ENCODE measurements at regions of chr4 and their contacts with region 1.

Region 1: GRCh38 chr4:21753084-21753760 is 195.3 kb downstream of the KCNIP4 start:
- DNase-seq: no peak
- H3K4me3 ChIP-seq: no peak overlapping the region
- H3K27ac ChIP-seq: no peak overlapping the region
- H3K27me3 ChIP-seq: no peaks in the 10 kb centered on the region
- CTCF ChIP-seq: no peak

Region 2: DNA sequence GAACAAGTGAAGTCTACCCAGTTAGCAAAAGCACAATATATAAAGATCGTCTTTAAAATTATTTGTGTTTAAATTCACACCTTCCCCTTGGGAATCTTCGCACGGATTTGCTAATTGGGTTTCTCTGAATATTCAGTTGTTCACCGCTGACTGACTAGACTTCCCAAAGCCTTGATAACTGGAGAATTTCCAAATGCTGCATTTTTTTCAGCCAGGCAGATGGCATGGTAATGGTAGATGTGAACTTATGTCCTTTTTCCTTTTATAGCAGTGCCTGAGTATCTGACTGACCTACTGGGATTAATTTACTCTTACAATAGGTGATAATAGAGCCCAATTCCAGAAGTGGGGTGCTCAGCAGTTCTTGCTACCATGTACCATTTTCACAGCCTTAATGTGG is 504.9 kb before region 1 on chr4:
- intact Hi-C with region 1: no loop called
- DNase-seq: peak in 1 of 10 donors; percentile 38
- H3K4me3 ChIP-seq: no peak overlapping the region
- H3K27ac ChIP-seq: no peak overlapping the region
- H3K27me3 ChIP-seq: no peaks in the 10 kb centered on the region
- CTCF ChIP-seq: no peak

Region 3: GRCh38 chr4:21592970-21593670 is 160.1 kb before region 1 on chr4:
- intact Hi-C with region 1: loop called in 1 of 2 experiments (anchors 10 kb)
- DNase-seq: peak in 1 of 10 donors; percentile 66
- H3K4me3 ChIP-seq: no peak overlapping the region
- H3K27ac ChIP-seq: no peak overlapping the region
- H3K27me3 ChIP-seq: no peaks in the 10 kb centered on the region
- CTCF ChIP-seq: no peak

Region 4: DNA sequence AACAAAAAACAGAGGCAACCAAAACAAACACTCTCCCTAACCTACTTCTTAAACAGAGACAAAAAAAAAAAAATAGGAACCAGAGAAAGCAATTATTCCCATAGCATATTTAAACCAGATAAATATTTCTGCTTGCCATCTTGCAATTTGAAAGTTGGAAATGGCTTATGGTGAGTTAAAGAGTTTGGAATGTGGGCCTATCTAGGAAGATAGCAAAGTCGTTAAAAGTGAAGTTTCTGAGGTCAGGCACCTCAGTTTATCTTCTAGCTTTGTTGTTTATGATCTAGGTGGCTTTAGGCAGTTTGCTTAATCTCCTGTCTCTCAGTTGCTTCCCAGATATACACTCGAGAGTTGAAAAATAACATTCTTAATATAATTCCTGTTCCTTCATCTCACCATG is 88.9 kb before region 1 on chr4:
- intact Hi-C with region 1: no loop called
- DNase-seq: no peak
- H3K4me3 ChIP-seq: no peak overlapping the region
- H3K27ac ChIP-seq: no peak overlapping the region
- H3K27me3 ChIP-seq: no peaks in the 10 kb centered on the region
- CTCF ChIP-seq: no peak

Region 5: GRCh38 chr4:21716526-21716925 is 36.7 kb before region 1 on chr4:
- intact Hi-C with region 1: no loop called
- DNase-seq: no peak
- H3K4me3 ChIP-seq: no peak overlapping the region
- H3K27ac ChIP-seq: no peak overlapping the region
- H3K27me3 ChIP-seq: no peaks in the 10 kb centered on the region
- CTCF ChIP-seq: no peak